IMR-90 (cell line): ENCODE measurements at regions of chr1 and their contacts with region 1.

Region 1: GRCh38 chr1:92168657-92169056 is 49.1 kb upstream of the C1orf146 start:
- DNase-seq: peak; percentile 74
- ATAC-seq: peak; percentile 45
- H3K4me3 ChIP-seq: peak overlapping the region; percentile 21; the same call in 1 of the 2 replicates
- H3K27ac ChIP-seq: peak overlapping the region; percentile 100; the same call in 1 of the 2 replicates
- H3K4me1 ChIP-seq: peaks cover 3% of the 10 kb centered on the region
- H3K27me3 ChIP-seq: no peaks in the 10 kb centered on the region
- CTCF ChIP-seq: no peak
- POLR2A ChIP-seq: no peak
- RAD21 ChIP-seq: no peak

Region 2: GRCh38 chr1:92117526-92117925 is 51.1 kb before region 1 on chr1:
- CTCF ChIA-PET with region 1: no interaction called
- POLR2A ChIA-PET with region 1: no interaction called
- dilution Hi-C with region 1: no loop called
- in situ Hi-C with region 1: no loop called
- intact Hi-C with region 1: no loop called
- DNase-seq: no peak
- ATAC-seq: no peak
- H3K4me3 ChIP-seq: no peak overlapping the region
- H3K27ac ChIP-seq: no peak overlapping the region
- H3K4me1 ChIP-seq: no peaks in the 10 kb centered on the region
- H3K27me3 ChIP-seq: no peaks in the 10 kb centered on the region
- CTCF ChIP-seq: no peak
- POLR2A ChIP-seq: no peak
- RAD21 ChIP-seq: no peak

Region 3: GRCh38 chr1:92230736-92231135 is 62.1 kb after region 1 on chr1:
- CTCF ChIA-PET with region 1: interaction called, 10 read pairs
- POLR2A ChIA-PET with region 1: no interaction called
- dilution Hi-C with region 1: no loop called
- in situ Hi-C with region 1: no loop called
- intact Hi-C with region 1: no loop called
- DNase-seq: no peak
- ATAC-seq: no peak
- H3K4me3 ChIP-seq: no peak overlapping the region
- H3K27ac ChIP-seq: no peak overlapping the region
- H3K4me1 ChIP-seq: no peaks in the 10 kb centered on the region
- H3K27me3 ChIP-seq: no peaks in the 10 kb centered on the region; the same call in 1 of the 2 replicates
- CTCF ChIP-seq: no peak
- POLR2A ChIP-seq: no peak
- RAD21 ChIP-seq: no peak